ENCODE measurements at regions of chr5 and their contacts with region 1.

Region 1: DNA sequence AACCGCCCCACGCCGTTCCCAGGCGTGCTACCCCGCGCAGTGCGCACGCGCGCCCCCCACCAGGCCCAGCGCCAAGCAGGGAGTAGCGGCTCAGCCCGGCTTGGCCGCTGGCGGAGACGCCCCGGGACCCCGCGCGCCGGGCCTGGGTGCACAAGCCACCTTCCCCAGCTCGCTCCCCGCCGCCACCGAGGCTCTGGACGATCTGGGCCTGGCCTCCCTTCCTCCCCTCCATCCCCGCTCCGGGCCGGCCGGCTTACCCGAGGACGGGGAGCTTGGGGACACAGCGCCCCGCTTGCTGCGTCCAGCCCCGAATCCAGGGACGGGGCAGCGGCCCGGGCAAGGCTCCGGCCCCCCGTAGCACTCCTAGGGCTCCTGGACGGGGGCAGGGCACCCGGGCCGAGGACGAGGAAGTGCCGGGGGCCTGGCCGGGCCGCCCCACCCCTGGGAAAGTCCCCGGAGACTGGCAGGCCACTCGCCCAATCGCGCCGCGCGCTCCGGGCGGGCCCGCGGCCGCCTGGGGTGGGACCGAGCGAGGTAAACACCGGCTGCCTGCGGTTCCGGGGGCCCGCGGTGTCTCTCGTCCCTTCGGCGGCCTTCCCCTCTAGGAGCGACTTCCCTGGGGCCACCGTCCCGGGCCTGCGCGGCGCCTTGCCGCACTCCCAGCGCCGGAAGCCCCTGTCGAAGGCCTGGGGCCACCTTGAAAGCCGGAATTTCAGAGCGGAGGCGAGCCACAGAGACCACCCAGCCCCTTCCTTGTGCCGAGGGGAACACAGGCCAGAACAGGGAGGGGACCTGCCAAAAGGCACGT is at the start of gene TNIP1:
- DNase-seq: peak; percentile 94
- H3K4me3 Mint-ChIP-seq: peak within 1 kb of the TSS; percentile 88
- H3K27ac Mint-ChIP-seq: peak within 1 kb of the TSS; percentile 86
- H3K4me1 Mint-ChIP-seq: peaks cover 83% of the 10 kb centered on the region
- H3K27me3 Mint-ChIP-seq: no peaks in the 10 kb centered on the region
- total RNA-seq, gene TNIP1: 188 to 201 TPM

Region 2: GRCh38 chr5:150946351-150946905 is 134.4 kb before region 1 on chr5:
- CTCF ChIA-PET with region 1: no interaction called
- POLR2A ChIA-PET with region 1: no interaction called
- DNase-seq: no peak
- H3K4me3 Mint-ChIP-seq: no peak overlapping the region
- H3K27ac Mint-ChIP-seq: no peak overlapping the region
- H3K4me1 Mint-ChIP-seq: no peaks in the 10 kb centered on the region
- H3K27me3 Mint-ChIP-seq: no peaks in the 10 kb centered on the region

Region 3: GRCh38 chr5:151058891-151059489 is 21.8 kb before region 1 on chr5:
- CTCF ChIA-PET with region 1: interaction called, 3 read pairs
- POLR2A ChIA-PET with region 1: interaction called, 11 read pairs
- DNase-seq: no peak
- H3K4me3 Mint-ChIP-seq: no peak overlapping the region
- H3K27ac Mint-ChIP-seq: peak overlapping the region; percentile 80
- H3K4me1 Mint-ChIP-seq: peaks cover 35% of the 10 kb centered on the region
- H3K27me3 Mint-ChIP-seq: no peaks in the 10 kb centered on the region

Region 4: DNA sequence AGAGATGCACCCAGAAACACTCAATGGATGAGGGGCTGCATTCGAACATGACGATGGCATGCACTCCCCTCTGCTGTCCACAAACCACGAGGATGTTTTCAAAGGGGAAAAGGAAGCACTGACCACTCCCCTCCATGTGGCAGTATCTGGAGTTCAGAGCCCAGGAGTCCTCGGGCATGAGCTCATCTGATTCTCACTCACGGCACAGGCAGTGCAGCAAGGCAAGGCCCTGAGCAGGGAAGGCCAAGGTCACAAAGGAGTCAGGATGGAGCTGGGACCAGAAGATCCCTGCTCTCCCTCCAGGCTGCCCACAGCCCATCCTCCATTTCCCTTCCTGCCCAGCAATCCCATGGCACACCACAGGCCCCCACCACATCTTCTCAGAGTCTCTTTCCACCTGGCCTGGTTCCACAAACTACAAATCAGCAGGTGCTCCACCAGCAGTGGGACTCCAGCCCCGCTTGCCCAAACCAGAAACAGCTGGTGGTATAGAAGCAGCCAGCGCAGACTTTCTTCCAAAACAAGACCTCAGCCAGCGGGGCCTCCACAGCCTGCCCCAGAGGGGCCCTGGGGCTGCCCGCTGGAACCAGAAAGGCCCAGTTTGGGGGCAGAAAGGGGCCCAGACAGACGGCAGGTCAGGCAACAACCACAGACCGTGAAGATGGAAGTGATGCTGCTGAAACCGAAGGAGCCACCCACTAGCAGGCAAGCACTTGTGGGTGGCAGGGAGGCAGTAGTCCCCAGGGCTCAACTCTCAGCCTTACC is 12.2 kb before region 1 on chr5:
- CTCF ChIA-PET with region 1: interaction called, 3 read pairs
- POLR2A ChIA-PET with region 1: interaction called, 24 read pairs
- DNase-seq: peak; percentile 28
- H3K4me3 Mint-ChIP-seq: no peak overlapping the region
- H3K27ac Mint-ChIP-seq: peak overlapping the region; percentile 66
- H3K4me1 Mint-ChIP-seq: peaks cover 70% of the 10 kb centered on the region
- H3K27me3 Mint-ChIP-seq: no peaks in the 10 kb centered on the region

Region 5: GRCh38 chr5:151093476-151093889 is 12.7 kb after region 1 on chr5:
- CTCF ChIA-PET with region 1: interaction called, 5 read pairs
- POLR2A ChIA-PET with region 1: interaction called, 244 read pairs
- DNase-seq: no peak
- H3K4me3 Mint-ChIP-seq: peak overlapping the region; percentile 52
- H3K27ac Mint-ChIP-seq: peak overlapping the region; percentile 84
- H3K4me1 Mint-ChIP-seq: peaks cover 61% of the 10 kb centered on the region
- H3K27me3 Mint-ChIP-seq: peaks cover 5% of the 10 kb centered on the region

Measured in activated CD4-positive, alpha-beta memory T cell treated with anti-CD3 and anti-CD28 coated beads, Interleukin-2, amount 10 ng/mL, durations not matched to agents 7 days and 5 days (primary cell).